ENCODE measurements at regions of chr1 and their contacts with region 1.

Region 1: DNA sequence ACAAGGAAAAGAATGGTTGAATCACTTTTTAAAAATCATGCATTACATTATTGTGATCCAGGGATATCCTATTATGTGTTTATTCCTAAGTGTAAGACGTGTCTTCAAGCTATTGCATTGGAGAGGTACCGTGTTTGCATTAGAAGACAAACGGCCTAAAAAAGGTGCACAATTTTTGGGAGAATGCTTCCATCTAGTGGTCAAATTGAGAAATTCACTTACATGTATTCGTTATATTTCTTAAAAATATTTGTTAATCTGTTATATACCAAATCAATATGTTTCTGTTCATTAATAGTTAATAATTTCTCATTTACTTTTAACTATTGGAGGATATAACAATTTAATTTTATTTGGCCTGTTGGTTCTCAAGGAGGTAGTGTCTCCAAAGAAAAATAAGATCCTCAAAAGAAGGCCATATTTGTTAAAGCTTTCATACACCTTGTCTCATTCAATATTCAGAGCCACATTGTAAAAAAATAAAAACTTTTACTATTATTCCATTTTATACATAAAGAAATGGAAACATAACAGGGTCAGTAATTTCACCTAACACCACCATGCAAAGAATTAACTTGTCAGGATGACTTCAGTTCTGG is 40.5 kb upstream of the KCTD3 start:
- DNase-seq: no peak
- ATAC-seq: no peak
- H3K4me3 Mint-ChIP-seq: no peak overlapping the region
- H3K27ac Mint-ChIP-seq: no peak overlapping the region
- H3K4me1 Mint-ChIP-seq: no peaks in the 10 kb centered on the region
- H3K27me3 Mint-ChIP-seq: peaks cover 1% of the 10 kb centered on the region
- CTCF ChIP-seq: peak; percentile 58

Region 2: DNA sequence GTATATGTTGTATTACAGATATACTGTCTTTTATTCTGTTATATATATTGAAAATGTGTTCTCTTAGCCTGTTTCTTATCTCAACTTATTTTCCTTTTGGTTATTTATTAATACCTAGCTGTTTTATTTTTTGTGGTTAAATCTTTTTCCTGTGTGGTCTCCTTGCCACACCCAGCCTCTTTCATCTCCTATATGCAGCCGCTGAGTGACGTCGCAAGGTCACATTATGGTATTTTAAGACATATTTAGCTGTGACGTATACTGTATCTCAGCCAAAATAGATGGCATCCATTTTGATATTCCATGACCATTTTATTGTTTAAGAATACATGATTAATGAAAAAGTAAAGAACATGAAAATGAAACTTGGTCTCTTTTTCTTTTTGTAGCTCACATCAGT is 894.6 kb before region 1 on chr1:
- CTCF ChIA-PET with region 1: interaction called, 6 read pairs
- POLR2A ChIA-PET with region 1: no interaction called
- intact Hi-C with region 1: loop called (anchors 5 kb)
- DNase-seq: peak; percentile 31
- ATAC-seq: no peak
- H3K4me3 Mint-ChIP-seq: no peak overlapping the region
- H3K27ac Mint-ChIP-seq: no peak overlapping the region
- H3K4me1 Mint-ChIP-seq: peaks cover 18% of the 10 kb centered on the region
- H3K27me3 Mint-ChIP-seq: no peaks in the 10 kb centered on the region
- CTCF ChIP-seq: no peak

Measured in activated CD8-positive, alpha-beta T cell treated with anti-CD3 and anti-CD28 coated beads for 36 hours (primary cell).